ENCODE measurements at regions of chr2 and their contacts with region 1.

Region 1: DNA sequence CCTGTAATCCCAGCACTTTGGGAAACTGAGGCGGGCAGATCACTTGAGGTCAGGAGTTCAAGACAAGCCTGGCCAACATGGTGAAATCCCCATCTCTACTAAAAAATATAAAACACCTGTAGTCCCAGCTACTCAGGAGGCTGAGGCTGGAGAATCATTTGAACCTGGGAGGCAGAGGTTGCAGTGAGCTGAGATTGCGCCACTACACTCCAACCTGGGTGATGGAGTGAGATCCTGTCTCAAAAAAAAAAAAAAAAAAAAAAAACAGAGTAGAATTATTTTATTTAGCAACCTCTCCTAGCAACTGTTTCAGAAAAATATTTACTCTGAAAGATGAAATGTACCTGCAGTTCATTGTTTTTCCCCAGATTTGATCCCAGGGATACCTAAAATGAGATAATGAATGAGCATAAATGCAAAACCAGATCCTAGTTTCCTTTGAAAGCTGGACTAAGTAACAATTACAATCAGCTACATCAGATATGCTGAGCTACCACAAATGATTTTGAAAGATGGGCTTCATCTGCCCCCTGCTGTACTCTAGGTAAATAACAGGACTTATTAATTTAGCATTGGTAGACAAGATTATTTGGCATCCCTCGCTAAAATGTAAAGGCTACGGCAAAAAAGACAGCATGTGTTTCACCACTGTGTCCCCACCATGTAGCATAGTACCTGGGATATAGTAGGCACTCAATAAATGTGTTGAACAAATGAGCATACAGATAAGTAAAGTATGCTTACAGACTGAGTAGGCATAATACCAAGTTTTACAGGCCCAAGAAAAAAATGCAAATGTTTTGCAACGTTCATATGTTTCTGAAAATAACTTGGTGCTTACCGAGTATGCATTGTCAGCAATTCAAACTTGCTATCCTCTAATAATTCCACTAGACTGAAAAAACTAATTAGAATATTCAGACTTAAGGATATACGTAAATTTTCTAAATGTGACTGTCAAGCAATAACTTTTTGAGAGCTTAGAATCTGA is 102.5 kb downstream of the ATL2 start:
- DNase-seq: peak; percentile 47 to 67 (median 54)
- ATAC-seq: peak; percentile 82
- H3K4me3 ChIP-seq: no peak overlapping the region
- H3K27ac ChIP-seq: no peak overlapping the region
- H3K4me1 ChIP-seq: no peaks in the 10 kb centered on the region; a peak in 1 of 5 replicates
- H3K27me3 ChIP-seq: peaks cover 7 to 10% of the 10 kb centered on the region in 2 experiments; a peak in 3 of 5 replicates
- CTCF ChIP-seq: peak; percentile 46 to 84 (median 64); a peak in 5 of 6 replicates
- EP300 ChIP-seq: no peak
- POLR2A ChIP-seq: no peak
- RAD21 ChIP-seq: peak; percentile 95 to 96

Region 2: GRCh38 chr2:37890893-37891495 is 383.6 kb before region 1 on chr2:
- CTCF ChIA-PET with region 1: no interaction called
- POLR2A ChIA-PET with region 1: interaction called, 3 read pairs
- in situ Hi-C with region 1: no loop called
- intact Hi-C with region 1: loop called (anchors 2 kb)
- DNase-seq: peak; percentile 65 to 76 (median 70)
- ATAC-seq: peak; percentile 100
- H3K4me3 ChIP-seq: no peak overlapping the region
- H3K27ac ChIP-seq: no peak overlapping the region
- H3K4me1 ChIP-seq: no peaks in the 10 kb centered on the region
- H3K27me3 ChIP-seq: peaks cover 0 to 9% of the 10 kb centered on the region in 2 experiments; a peak in 2 of 5 replicates
- CTCF ChIP-seq: peak; percentile 81 to 86 (median 82)
- EP300 ChIP-seq: no peak
- POLR2A ChIP-seq: no peak
- RAD21 ChIP-seq: peak; percentile 67 to 82

Region 3: GRCh38 chr2:38115216-38116032 is 159.2 kb before region 1 on chr2:
- CTCF ChIA-PET with region 1: interaction called, 3 read pairs
- POLR2A ChIA-PET with region 1: no interaction called
- in situ Hi-C with region 1: no loop called
- intact Hi-C with region 1: loop called (anchors 5 kb)
- DNase-seq: peak; percentile 76 to 81 (median 78)
- ATAC-seq: peak; percentile 92
- H3K4me3 ChIP-seq: no peak overlapping the region
- H3K27ac ChIP-seq: no peak overlapping the region
- H3K4me1 ChIP-seq: no peaks in the 10 kb centered on the region
- H3K27me3 ChIP-seq: peaks cover 2 to 11% of the 10 kb centered on the region in 2 experiments; a peak in 3 of 5 replicates
- CTCF ChIP-seq: peak; percentile 86 to 93 (median 89)
- EP300 ChIP-seq: no peak
- POLR2A ChIP-seq: no peak
- RAD21 ChIP-seq: peak; percentile 90

Region 4: GRCh38 chr2:38174646-38175423 is 99.7 kb before region 1 on chr2:
- CTCF ChIA-PET with region 1: no interaction called
- POLR2A ChIA-PET with region 1: no interaction called
- in situ Hi-C with region 1: no loop called
- intact Hi-C with region 1: no loop called
- DNase-seq: no peak
- ATAC-seq: no peak
- H3K4me3 ChIP-seq: no peak overlapping the region
- H3K27ac ChIP-seq: no peak overlapping the region
- H3K4me1 ChIP-seq: no peaks in the 10 kb centered on the region
- H3K27me3 ChIP-seq: peaks cover 2 to 11% of the 10 kb centered on the region in 2 experiments; a peak in 3 of 5 replicates
- CTCF ChIP-seq: no peak
- EP300 ChIP-seq: no peak
- POLR2A ChIP-seq: no peak
- RAD21 ChIP-seq: no peak

Measured in K562 (cell line).